Common myeloid progenitor, CD34-positive (primary cell): ENCODE measurements at regions of chr20 and their contacts with region 1.

Region 1: DNA sequence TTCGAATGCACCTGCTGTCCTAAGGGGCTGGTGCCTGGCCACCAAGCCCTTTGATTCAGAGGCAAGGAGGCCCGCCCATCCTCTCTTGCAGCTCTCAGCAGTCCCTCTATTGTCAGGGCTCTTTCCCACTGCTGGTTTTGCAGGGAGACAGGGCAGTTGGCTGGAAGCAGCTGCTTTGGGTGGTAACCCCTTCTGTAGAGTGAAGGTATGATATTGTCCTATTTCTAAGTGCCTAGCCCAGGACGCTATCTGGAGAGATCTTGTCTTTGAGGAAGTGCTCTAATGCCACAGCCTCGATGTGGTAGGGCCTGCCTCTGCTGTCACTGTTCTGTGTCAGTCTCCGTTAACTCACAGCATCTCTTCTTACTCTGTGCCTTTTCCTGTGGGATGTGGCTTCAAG is 5.6 kb downstream of the PLCG1 start:
- DNase-seq: peak; percentile 49 to 87 (median 82)
- H3K4me3 ChIP-seq: no peak overlapping the region
- H3K27ac ChIP-seq: no peak overlapping the region
- H3K4me1 ChIP-seq: peaks cover 9 to 27% (median 24%) of the 10 kb centered on the region in 4 experiments
- H3K27me3 ChIP-seq: peaks cover 0 to 48% (median 30%) of the 10 kb centered on the region in 5 experiments

Region 2: GRCh38 chr20:40990542-40991120 is 152.3 kb before region 1 on chr20:
- CTCF ChIA-PET with region 1: no interaction called
- POLR2A ChIA-PET with region 1: no interaction called
- DNase-seq: peak; percentile 72 to 81 (median 78)
- H3K4me3 ChIP-seq: peak overlapping the region in 4 of 7 experiments; percentile 27 to 48 (median 38)
- H3K27ac ChIP-seq: peak overlapping the region in 1 of 2 experiments; percentile 45
- H3K4me1 ChIP-seq: peaks cover 15 to 33% (median 24%) of the 10 kb centered on the region in 4 experiments
- H3K27me3 ChIP-seq: no peaks in the 10 kb centered on the region

Region 3: DNA sequence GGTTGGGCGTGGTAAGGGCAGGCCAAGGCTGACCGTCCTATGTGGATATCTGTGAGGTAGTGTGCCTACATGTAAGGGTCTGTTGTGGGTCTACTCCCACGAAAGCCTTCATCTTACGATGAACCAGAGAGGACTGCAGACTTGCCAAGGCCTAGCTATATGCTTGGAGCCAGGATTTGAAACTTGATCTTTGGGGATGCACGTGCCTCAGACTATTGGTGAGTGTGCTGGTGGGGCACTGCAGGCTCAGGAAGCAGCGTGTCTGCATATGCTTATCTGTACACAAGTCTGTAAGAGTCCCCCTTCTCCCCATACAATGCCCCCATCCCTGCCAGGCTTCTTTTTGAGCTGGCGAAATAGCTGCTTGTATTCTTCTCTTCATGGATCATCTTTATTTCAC is 12.3 kb after region 1 on chr20:
- CTCF ChIA-PET with region 1: interaction called, 10 read pairs
- POLR2A ChIA-PET with region 1: interaction called, 3 read pairs
- DNase-seq: no peak
- H3K4me3 ChIP-seq: no peak overlapping the region
- H3K27ac ChIP-seq: no peak overlapping the region
- H3K4me1 ChIP-seq: peaks cover 0 to 24% (median 15%) of the 10 kb centered on the region in 4 experiments
- H3K27me3 ChIP-seq: peaks cover 0 to 75% (median 16%) of the 10 kb centered on the region in 5 experiments